ENCODE measurements at regions of chrX and their contacts with region 1.

Region 1: GRCh38 chrX:99820197-99820596 is 589.9 kb downstream of the PCDH19 start:
- DNase-seq: no peak
- ATAC-seq: no peak
- H3K4me3 ChIP-seq: no peak overlapping the region
- H3K27ac ChIP-seq: no peak overlapping the region
- H3K4me1 ChIP-seq: no peaks in the 10 kb centered on the region
- H3K27me3 ChIP-seq: no peaks in the 10 kb centered on the region
- CTCF ChIP-seq: no peak
- EP300 ChIP-seq: no peak
- POLR2A ChIP-seq: no peak
- RAD21 ChIP-seq: no peak

Region 2: DNA sequence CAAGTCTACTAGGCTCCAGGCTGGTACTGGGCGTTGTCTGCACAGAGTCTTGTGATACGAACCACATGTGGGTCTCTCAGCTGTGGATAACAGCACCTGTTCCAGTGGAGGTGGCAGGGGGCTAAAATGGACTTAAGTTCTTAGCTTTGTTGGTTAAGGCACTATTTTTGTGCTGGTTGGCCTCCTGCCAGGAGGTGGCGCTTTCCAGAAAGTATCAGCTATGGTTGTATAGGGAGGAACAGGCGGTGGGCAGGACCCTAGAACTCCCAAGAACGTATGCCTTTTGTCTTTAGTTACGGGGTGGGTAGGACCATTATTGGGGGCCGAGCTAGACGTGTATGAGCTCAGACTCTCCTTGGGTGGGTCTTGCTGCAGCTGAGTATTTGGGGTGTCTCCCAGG is 548.6 kb before region 1 on chrX:
- CTCF ChIA-PET with region 1: no interaction called
- POLR2A ChIA-PET with region 1: no interaction called
- RAD21 ChIA-PET with region 1: no interaction called
- SMC1A ChIA-PET with region 1: no interaction called
- in situ Hi-C with region 1: no loop called
- intact Hi-C with region 1: no loop called
- DNase-seq: no peak
- ATAC-seq: no peak
- H3K4me3 ChIP-seq: no peak overlapping the region
- H3K27ac ChIP-seq: no peak overlapping the region
- H3K4me1 ChIP-seq: no peaks in the 10 kb centered on the region
- H3K27me3 ChIP-seq: no peaks in the 10 kb centered on the region
- CTCF ChIP-seq: no peak
- EP300 ChIP-seq: no peak
- POLR2A ChIP-seq: no peak
- RAD21 ChIP-seq: no peak

Region 3: GRCh38 chrX:99750721-99751120 is 69.5 kb before region 1 on chrX:
- CTCF ChIA-PET with region 1: no interaction called
- POLR2A ChIA-PET with region 1: no interaction called
- RAD21 ChIA-PET with region 1: no interaction called
- SMC1A ChIA-PET with region 1: no interaction called
- in situ Hi-C with region 1: loop called (anchors 10 kb)
- intact Hi-C with region 1: no loop called
- DNase-seq: no peak
- ATAC-seq: no peak
- H3K4me3 ChIP-seq: no peak overlapping the region
- H3K27ac ChIP-seq: no peak overlapping the region
- H3K4me1 ChIP-seq: no peaks in the 10 kb centered on the region
- H3K27me3 ChIP-seq: no peaks in the 10 kb centered on the region
- CTCF ChIP-seq: no peak
- EP300 ChIP-seq: no peak
- POLR2A ChIP-seq: no peak
- RAD21 ChIP-seq: no peak

Region 4: DNA sequence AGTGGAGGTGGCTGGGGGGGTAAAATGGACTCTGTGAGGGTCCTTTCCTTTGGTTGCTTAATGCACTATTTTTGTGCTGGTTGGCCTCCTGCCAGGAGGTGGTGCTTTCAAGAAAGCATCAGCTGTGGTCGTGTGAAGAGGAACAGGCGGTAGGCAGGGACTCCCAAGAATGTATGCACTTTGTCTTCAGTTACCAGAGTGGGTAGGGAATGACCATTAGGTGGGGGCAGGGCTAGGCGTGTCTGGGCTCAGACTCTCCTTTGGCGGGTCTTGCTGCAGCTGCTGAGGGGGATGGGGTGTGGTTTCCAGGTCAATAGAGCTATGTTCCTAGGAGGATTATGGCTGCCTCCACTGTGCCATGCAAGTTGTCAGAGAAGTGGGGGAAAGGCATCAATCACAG is 80.9 kb after region 1 on chrX:
- CTCF ChIA-PET with region 1: no interaction called
- POLR2A ChIA-PET with region 1: no interaction called
- RAD21 ChIA-PET with region 1: no interaction called
- SMC1A ChIA-PET with region 1: no interaction called
- in situ Hi-C with region 1: no loop called
- intact Hi-C with region 1: no loop called
- DNase-seq: no peak
- ATAC-seq: no peak
- H3K4me3 ChIP-seq: no peak overlapping the region
- H3K27ac ChIP-seq: no peak overlapping the region
- H3K4me1 ChIP-seq: no peaks in the 10 kb centered on the region
- H3K27me3 ChIP-seq: no peaks in the 10 kb centered on the region
- CTCF ChIP-seq: no peak
- EP300 ChIP-seq: no peak
- POLR2A ChIP-seq: no peak
- RAD21 ChIP-seq: no peak